Prostate gland (tissue), 2 donors: ENCODE measurements at regions of chr14 and their contacts with region 1.

Region 1: DNA sequence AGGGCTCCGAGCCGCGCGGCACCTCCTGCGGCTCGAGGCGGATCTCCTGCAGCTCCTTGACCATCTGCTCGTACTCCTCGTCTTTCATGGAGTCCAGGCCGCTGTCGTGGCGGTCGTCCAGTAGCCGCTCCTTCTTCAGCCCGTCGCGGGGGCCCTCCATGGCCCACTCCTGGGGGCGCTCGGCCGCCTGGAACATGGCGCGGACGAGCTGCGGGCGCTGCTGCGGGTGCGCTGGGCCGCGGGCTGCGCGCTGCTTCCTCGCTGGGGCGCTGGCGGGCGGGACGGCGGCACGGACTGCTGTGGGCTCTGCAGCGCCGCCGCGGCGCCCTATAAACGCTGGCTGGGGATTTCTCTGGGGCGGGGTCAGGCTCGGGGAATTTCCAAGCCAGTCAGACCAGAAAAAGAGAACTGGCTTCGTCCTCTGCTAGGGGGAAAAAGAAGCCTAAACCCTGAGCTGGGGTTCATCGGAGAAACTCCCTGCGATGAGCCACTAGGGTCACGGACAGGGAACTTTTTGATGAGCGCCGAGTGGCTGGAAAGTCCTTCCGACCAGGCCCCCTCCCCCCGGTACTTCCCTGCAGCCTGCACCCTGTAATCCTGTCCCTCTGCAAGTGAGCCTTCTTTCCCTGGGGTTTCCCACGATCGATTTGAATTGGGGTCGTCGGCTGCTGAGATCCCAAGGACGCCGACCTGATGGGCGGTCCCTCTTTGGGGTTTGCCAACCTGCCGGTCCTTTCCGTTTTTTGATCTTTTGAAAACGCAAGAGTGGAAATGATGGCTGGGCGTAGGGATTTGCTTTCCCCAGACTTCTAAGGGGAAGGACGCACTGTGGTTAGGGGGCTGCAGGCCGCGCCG is at the start of gene NFKBIA:
- DNase-seq: peak; percentile 87
- H3K4me3 ChIP-seq: peak within 1 kb of the TSS; percentile 97 to 99
- H3K27ac ChIP-seq: peak within 1 kb of the TSS; percentile 100
- H3K4me1 ChIP-seq: peaks cover 4% of the 10 kb centered on the region
- H3K27me3 ChIP-seq: no peaks in the 10 kb centered on the region
- CTCF ChIP-seq: peak in 3 of 4 experiments; percentile 29 to 52 (median 34)
- POLR2A ChIP-seq: peak; percentile 98
- total RNA-seq, gene NFKBIA: 294 to 415 TPM

Region 2: DNA sequence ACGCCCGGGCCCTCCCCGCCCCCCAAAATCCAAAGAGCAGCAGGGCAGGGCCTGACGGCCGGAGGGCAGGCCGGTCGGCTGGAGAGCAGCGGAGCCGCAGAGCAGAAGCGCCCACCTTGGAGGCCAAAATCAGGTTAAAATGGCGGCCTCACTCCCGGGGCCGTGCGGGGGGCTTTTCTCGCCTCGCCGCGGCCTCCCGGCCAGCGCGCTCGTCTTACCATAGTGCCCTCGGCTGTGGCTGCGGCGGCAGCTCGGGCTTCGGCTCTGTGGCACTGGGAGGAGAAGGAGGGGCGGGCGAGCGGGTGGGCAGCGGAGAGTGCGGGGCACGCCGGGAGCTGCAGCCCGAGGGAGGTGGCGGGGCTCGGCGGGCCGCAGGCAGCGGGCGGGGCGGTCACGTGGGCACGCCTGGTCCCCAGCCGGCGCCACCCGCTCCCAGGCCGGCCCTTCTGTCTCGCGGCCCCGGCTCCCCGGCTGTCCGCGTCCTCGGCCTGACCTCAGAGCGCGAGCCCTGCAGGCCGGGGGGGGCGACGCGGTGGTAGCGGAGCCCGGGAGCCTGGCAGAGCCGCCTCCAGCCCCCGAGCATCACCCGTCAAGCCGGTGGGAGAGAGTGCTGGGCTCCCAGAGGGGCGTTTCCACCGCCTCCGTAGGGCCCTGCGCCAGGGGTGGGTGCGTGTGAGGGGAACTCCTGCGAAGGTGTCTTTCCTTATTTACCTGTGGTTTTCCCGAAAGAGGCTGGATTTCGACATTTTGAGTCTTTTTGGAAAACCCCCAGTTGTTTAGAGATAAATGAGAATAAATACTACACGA is 690.2 kb before region 1 on chr14 and contains the start of gene CFL2:
- intact Hi-C with region 1: loop called (anchors 5 kb)
- DNase-seq: peak; percentile 79
- H3K4me3 ChIP-seq: peak within 1 kb of the TSS; percentile 91 to 96
- H3K27ac ChIP-seq: peak within 1 kb of the TSS; percentile 94 to 99
- H3K4me1 ChIP-seq: no peaks in the 10 kb centered on the region
- H3K27me3 ChIP-seq: no peaks in the 10 kb centered on the region
- CTCF ChIP-seq: peak in 1 of 4 experiments; percentile 10
- POLR2A ChIP-seq: peak; percentile 64
- total RNA-seq, gene CFL2: 46.3 to 79.2 TPM

Region 3: GRCh38 chr14:34982417-34983147 is 422.1 kb before region 1 on chr14 and contains the start of gene SRP54:
- intact Hi-C with region 1: loop called (anchors 5 kb)
- DNase-seq: peak; percentile 99
- H3K4me3 ChIP-seq: peak within 1 kb of the TSS; percentile 79 to 93
- H3K27ac ChIP-seq: peak within 1 kb of the TSS; percentile 93 to 99
- H3K4me1 ChIP-seq: no peaks in the 10 kb centered on the region
- H3K27me3 ChIP-seq: no peaks in the 10 kb centered on the region
- CTCF ChIP-seq: peak in 2 of 4 experiments; percentile 68 to 76
- POLR2A ChIP-seq: peak; percentile 99
- total RNA-seq, gene SRP54: 54.9 to 70.0 TPM

Region 4: GRCh38 chr14:35121887-35122695 is 282.6 kb before region 1 on chr14 and contains the starts of genes PPP2R3C and PRORP:
- intact Hi-C with region 1: loop called (anchors 5 kb)
- DNase-seq: peak; percentile 97
- H3K4me3 ChIP-seq: peak within 1 kb of the TSS; percentile 59 to 61
- H3K27ac ChIP-seq: peak within 1 kb of the TSS; percentile 92 to 98
- H3K4me1 ChIP-seq: no peaks in the 10 kb centered on the region
- H3K27me3 ChIP-seq: no peaks in the 10 kb centered on the region
- CTCF ChIP-seq: no peak
- POLR2A ChIP-seq: peak; percentile 25
- total RNA-seq, gene PPP2R3C: 16.1 to 20.9 TPM
- total RNA-seq, gene PRORP: 19.7 to 27.9 TPM

Region 5: GRCh38 chr14:35205737-35206136 is 198.9 kb before region 1 on chr14:
- intact Hi-C with region 1: no loop called
- DNase-seq: no peak
- H3K4me3 ChIP-seq: no peak overlapping the region
- H3K27ac ChIP-seq: no peak overlapping the region
- H3K4me1 ChIP-seq: no peaks in the 10 kb centered on the region
- H3K27me3 ChIP-seq: no peaks in the 10 kb centered on the region
- CTCF ChIP-seq: no peak
- POLR2A ChIP-seq: no peak

Region 6: GRCh38 chr14:35229495-35230089 is 175.1 kb before region 1 on chr14:
- intact Hi-C with region 1: no loop called
- DNase-seq: no peak
- H3K4me3 ChIP-seq: no peak overlapping the region
- H3K27ac ChIP-seq: no peak overlapping the region
- H3K4me1 ChIP-seq: no peaks in the 10 kb centered on the region
- H3K27me3 ChIP-seq: no peaks in the 10 kb centered on the region
- CTCF ChIP-seq: peak in 2 of 4 experiments; percentile 7 to 25
- POLR2A ChIP-seq: no peak

Region 7: DNA sequence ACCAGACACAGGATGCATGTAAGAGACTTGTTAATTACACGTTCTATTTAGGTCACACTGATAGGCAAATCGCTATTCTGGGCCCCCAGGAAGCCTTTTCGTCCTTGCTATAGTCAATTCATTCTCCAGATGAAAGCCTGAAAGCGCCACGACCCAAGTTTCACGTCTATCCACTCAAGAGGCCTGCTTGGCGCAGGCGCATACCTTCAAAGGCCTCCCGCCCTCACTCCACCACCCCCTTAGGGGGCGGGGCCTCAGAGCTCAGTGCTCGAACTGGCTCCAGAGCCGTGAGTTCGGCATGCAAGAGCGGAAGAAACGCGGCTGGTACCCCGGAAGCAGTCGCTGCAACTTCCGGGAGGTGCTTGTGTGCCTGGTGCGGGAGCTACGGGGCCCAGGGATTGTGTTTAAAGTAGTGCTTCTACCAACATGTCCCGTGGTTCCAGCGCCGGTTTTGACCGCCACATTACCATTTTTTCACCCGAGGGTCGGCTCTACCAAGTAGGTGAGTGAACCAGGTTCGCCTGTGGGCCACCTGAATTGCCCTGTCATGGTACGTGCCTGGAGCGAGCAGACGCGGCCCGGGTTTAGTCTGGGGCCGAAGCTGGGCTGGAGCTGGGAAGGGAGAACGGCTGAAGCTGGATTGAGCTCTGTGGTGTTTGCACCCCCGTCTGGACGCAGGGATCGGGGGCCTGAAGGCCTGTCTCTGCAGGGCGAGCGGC is 112.5 kb before region 1 on chr14 and contains the start of gene PSMA6:
- intact Hi-C with region 1: loop called (anchors 1 kb)
- DNase-seq: peak; percentile 99
- H3K4me3 ChIP-seq: peak within 1 kb of the TSS; percentile 47 to 59
- H3K27ac ChIP-seq: peak within 1 kb of the TSS; percentile 73 to 82
- H3K4me1 ChIP-seq: peaks cover 6% of the 10 kb centered on the region
- H3K27me3 ChIP-seq: no peaks in the 10 kb centered on the region
- CTCF ChIP-seq: peak in 1 of 4 experiments; percentile 6
- POLR2A ChIP-seq: peak; percentile 73
- total RNA-seq, gene PSMA6: 84.1 to 181 TPM

Region 8: DNA sequence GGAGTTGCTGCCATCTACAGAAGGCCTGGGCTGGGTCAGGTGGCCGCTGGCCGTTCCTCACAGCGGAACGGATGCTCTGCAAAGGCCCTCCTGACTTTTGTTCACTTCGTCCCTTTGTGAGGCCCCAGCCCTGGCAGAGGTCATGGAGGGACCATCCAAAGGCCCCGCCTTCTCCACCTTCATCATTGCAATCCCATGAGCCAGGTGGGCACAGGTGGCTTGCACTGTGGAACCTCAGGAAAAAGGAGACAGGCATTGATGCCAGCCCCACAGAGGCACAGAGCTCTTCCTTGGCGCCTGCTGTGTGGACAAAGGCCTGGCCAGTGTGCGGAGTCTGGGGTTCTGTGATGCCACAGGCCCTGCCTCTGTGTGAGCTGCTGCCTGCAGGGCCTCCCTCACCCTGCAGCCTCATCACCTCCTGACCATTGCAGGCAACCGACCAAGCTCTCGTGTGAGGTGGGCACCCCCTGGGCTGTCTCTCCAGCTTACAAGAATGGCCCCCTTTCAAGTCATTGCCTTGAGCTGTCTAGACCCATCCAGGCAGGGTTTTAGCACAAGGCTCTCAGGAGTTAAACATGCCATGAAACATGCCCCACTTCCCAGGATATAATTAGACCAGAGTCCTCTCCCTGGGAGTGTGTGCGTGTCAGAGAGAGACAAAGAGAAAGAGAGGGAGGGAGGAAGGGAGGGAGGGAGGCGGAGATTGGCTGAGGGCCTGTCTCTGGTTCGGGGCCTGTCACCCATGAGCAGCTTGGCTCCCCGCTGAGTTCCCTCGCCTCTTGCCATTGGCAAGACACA is 19.4 kb before region 1 on chr14:
- intact Hi-C with region 1: loop called (anchors 1 kb)
- DNase-seq: peak; percentile 72
- H3K4me3 ChIP-seq: no peak overlapping the region
- H3K27ac ChIP-seq: peak overlapping the region; percentile 63 to 67
- H3K4me1 ChIP-seq: peaks cover 5% of the 10 kb centered on the region
- H3K27me3 ChIP-seq: no peaks in the 10 kb centered on the region
- CTCF ChIP-seq: no peak
- POLR2A ChIP-seq: no peak

Region 9: DNA sequence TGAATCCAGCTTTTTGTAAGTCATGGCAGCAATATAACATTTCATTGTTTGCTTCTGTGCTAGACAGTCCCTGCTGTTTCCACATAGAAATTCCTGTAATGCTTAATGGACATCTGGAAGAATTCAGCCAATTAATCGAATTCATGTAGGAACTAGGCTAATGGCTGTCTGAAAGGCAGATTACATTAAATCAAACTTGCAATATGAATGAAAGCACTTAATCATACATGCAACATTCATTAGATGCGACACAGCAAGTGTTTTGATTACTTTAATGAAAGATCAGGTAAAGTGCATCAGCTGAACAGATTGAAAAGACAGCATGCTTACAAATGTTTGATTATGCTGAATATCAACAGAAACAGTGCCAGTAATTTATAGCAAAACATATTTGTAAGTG is 105.2 kb after region 1 on chr14:
- intact Hi-C with region 1: no loop called
- DNase-seq: no peak
- H3K4me3 ChIP-seq: no peak overlapping the region
- H3K27ac ChIP-seq: no peak overlapping the region
- H3K4me1 ChIP-seq: no peaks in the 10 kb centered on the region
- H3K27me3 ChIP-seq: no peaks in the 10 kb centered on the region
- CTCF ChIP-seq: no peak
- POLR2A ChIP-seq: no peak